AG04450 (cell line): ENCODE measurements at regions of chr4 and their contacts with region 1.

Region 1: DNA sequence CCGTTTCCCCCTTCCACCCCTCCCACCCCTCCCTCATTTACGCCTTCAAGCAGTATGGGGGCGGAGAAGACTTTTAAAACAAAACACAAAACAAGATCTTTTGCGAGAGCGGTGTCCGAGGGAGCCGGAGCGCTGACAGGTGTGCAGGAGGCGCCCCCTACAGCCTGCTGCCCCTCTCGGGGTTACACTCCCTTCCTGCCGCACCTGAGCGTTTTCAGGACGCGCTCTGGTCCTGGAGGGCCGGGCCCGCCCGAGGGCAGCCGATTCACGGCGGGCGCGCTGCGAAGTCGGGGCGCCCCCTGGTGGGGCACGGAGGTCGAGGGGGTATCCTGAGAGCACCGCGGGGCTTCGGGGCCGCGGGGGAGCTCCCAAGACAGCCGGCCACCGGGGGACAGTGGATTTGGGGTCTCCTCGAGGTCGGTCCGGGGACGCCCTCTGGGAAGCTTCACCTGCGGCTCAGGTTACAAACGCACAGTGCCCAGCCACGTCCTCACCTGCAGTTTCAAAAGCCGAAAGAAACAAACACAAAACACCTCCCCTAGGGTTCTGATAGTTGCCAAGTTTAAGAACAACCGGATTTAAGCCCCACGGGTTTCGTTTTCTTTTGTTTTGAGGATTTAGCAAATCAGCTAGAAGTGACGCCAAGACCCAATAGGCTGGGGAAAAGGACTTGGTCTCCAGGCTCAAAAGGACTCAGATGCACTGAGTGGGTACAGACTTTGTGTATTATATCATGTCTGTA is 8.0 kb upstream of the NEUROG2 start:
- DNase-seq: no peak
- H3K4me3 ChIP-seq: peak overlapping the region; percentile 57
- H3K27ac ChIP-seq: no peak overlapping the region
- H3K27me3 ChIP-seq: peaks cover 59% of the 10 kb centered on the region
- CTCF ChIP-seq: peak; percentile 72

Region 2: GRCh38 chr4:112511093-112511802 is 12.7 kb before region 1 on chr4:
- CTCF ChIA-PET with region 1: interaction called, 16 read pairs
- POLR2A ChIA-PET with region 1: no interaction called
- DNase-seq: no peak
- H3K4me3 ChIP-seq: no peak overlapping the region
- H3K27ac ChIP-seq: no peak overlapping the region
- H3K27me3 ChIP-seq: peaks cover 75% of the 10 kb centered on the region
- CTCF ChIP-seq: no peak

Region 3: DNA sequence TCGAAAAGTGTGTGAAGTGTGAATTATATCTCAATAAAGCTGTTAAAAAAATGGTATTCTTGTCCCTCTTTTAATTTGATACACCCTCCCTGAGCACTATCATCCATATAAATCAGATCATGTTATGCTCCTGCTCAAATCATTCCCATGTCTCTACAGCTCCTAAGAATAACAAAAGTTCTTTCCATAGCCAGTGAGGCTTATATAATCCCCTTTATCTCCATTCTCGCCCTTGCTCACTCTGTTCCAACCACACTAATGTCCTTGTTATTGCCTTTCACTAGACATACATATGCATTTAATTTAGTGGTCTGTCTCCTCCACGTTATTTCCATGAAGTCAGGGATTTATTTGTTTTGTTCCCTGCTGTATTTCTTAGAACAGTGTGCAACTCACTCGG is 102.3 kb after region 1 on chr4:
- CTCF ChIA-PET with region 1: no interaction called
- POLR2A ChIA-PET with region 1: no interaction called
- DNase-seq: no peak
- H3K4me3 ChIP-seq: no peak overlapping the region
- H3K27ac ChIP-seq: no peak overlapping the region
- H3K27me3 ChIP-seq: no peaks in the 10 kb centered on the region
- CTCF ChIP-seq: no peak